ENCODE measurements at regions of chr15 and their contacts with region 1.

Region 1: GRCh38 chr15:40098489-40099261 is 10.0 kb downstream of the BMF start:
- DNase-seq: peak; percentile 93
- H3K4me3 ChIP-seq: no peak overlapping the region; the same call in 1 of the 2 replicates
- H3K27ac ChIP-seq: peak overlapping the region; percentile 94
- H3K27me3 ChIP-seq: no peaks in the 10 kb centered on the region
- CTCF ChIP-seq: no peak

Region 2: GRCh38 chr15:39666677-39667076 is 432.0 kb before region 1 on chr15:
- CTCF ChIA-PET with region 1: no interaction called
- POLR2A ChIA-PET with region 1: no interaction called
- DNase-seq: peak; percentile 38
- H3K4me3 ChIP-seq: no peak overlapping the region
- H3K27ac ChIP-seq: no peak overlapping the region
- H3K27me3 ChIP-seq: no peaks in the 10 kb centered on the region
- CTCF ChIP-seq: no peak

Region 3: GRCh38 chr15:39736412-39737197 is 362.1 kb before region 1 on chr15:
- CTCF ChIA-PET with region 1: no interaction called
- POLR2A ChIA-PET with region 1: no interaction called
- DNase-seq: no peak
- H3K4me3 ChIP-seq: no peak overlapping the region
- H3K27ac ChIP-seq: no peak overlapping the region
- H3K27me3 ChIP-seq: no peaks in the 10 kb centered on the region
- CTCF ChIP-seq: no peak

Region 4: DNA sequence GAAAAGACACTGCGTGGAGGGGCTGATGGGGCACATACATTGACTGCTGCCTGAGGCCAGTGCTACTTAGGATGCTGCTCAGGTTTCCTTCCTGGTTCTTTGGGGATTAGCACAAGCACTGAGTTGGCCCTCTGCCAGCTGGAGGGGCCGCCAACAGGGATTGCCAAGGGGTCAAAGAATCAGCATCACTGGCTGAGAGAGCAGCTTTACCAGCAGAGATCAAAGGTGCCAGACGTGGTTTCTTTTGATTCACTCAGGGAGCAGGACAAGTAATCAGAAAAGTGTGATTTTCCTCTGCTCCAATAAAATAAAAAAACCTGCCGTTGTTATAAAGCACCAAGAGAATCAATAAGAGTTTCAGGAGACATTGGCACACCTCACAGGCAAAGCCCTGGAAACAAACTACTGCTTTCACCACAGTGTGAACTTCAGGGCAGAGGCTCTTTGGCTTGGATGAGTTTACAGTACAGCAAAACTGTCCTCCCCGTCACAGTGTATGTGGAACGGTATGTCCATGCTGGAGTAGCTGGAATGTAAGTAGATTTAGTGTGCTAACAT is 270.2 kb before region 1 on chr15:
- CTCF ChIA-PET with region 1: no interaction called
- POLR2A ChIA-PET with region 1: no interaction called
- DNase-seq: no peak
- H3K4me3 ChIP-seq: no peak overlapping the region
- H3K27ac ChIP-seq: no peak overlapping the region
- H3K27me3 ChIP-seq: no peaks in the 10 kb centered on the region
- CTCF ChIP-seq: no peak

Region 5: GRCh38 chr15:40016224-40016865 is 82.3 kb before region 1 on chr15:
- CTCF ChIA-PET with region 1: no interaction called
- POLR2A ChIA-PET with region 1: interaction called, 12 read pairs
- DNase-seq: no peak
- H3K4me3 ChIP-seq: no peak overlapping the region
- H3K27ac ChIP-seq: peak overlapping the region; percentile 21
- H3K27me3 ChIP-seq: no peaks in the 10 kb centered on the region
- CTCF ChIP-seq: no peak

Region 6: DNA sequence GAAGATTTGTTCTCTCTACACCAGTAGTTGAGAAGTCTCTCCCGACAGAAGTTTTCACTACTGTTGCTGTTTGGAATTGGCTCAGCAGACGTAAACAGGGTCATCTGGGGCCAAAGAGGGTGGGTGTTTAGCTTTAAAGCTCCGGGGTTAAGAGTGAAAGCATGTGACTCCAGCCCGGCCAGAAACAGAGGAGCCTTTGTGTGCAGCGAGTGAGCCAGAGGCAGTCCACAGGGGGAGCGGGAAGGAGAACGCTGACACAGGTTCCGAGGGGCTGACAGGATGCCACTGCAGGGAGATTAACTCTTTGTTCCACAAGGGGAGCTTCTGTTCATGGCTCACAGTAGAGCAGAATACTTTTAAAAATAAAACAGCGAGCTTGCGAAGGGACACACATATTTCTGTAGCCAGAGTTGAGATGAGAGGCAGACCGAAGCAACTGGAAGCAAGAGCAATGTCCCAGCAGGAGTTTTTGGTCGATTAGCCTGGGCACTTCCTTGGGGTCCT is 16.9 kb before region 1 on chr15:
- CTCF ChIA-PET with region 1: interaction called, 14 read pairs
- POLR2A ChIA-PET with region 1: interaction called, 13 read pairs
- DNase-seq: no peak
- H3K4me3 ChIP-seq: peak overlapping the region; percentile 41
- H3K27ac ChIP-seq: peak overlapping the region; percentile 61
- H3K27me3 ChIP-seq: no peaks in the 10 kb centered on the region
- CTCF ChIP-seq: no peak

Region 7: DNA sequence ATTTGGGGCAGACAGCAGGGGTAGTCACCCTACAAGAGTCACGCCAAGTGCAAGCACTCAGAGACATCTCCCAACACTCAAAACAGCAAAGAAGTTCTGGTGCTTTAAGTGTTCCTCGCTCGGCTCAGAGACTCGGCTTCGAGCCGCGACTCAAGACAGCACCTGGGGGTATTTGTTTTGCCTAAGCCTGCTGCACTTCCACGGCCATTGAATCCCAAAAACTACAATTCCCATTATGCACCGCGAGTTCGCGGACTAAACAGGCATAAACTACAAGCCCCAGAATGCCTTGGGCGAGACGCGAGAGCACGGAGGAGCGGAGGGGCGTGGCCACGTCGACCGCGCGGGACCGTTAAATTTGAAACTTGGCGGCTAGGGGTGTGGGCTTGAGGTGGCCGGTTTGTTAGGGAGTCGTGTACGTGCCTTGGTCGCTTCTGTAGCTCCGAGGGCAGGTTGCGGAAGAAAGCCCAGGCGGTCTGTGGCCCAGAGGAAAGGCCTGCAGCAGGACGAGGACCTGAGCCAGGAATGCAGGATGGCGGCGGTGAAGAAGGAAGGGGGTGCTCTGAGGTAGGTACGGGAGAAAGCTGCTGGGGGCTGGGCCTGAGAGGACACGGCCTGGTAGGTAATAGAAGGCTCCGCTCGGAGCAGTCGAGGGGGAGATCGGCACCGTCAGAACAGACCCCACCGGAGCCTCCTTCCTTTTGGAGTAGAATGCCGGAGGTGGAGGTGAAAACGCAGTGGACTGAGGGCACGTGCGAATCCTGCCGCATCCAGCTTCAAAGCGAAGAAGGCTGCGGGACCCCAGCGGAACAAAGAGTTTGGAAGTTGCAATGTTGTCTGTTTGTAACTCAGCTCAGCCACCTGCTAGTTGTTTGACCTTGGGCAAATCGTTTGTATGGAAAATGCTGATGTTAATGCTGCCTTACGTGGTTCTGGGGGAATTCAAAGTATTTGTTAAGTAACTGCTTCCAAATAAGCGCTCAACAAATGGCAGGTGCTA is 62.3 kb after region 1 on chr15 and contains the start of gene BUB1B:
- CTCF ChIA-PET with region 1: no interaction called
- POLR2A ChIA-PET with region 1: no interaction called
- DNase-seq: peak; percentile 72
- H3K4me3 ChIP-seq: peak within 1 kb of the TSS; percentile 99
- H3K27ac ChIP-seq: no peak within 1 kb of the TSS
- H3K27me3 ChIP-seq: no peaks in the 10 kb centered on the region
- CTCF ChIP-seq: no peak
- polyA plus RNA-seq, gene BUB1B: 8.2 and 9.0 TPM in 2 replicates

Region 8: GRCh38 chr15:40743921-40744814 is 645.5 kb after region 1 on chr15:
- CTCF ChIA-PET with region 1: no interaction called
- POLR2A ChIA-PET with region 1: interaction called, 11 read pairs
- DNase-seq: no peak
- H3K4me3 ChIP-seq: no peak overlapping the region
- H3K27ac ChIP-seq: peak overlapping the region; percentile 39
- H3K27me3 ChIP-seq: no peaks in the 10 kb centered on the region
- CTCF ChIP-seq: peak; percentile 31; the same call in 1 of the 2 replicates